ENCODE measurements at regions of chr2 and their contacts with region 1.

Region 1: GRCh38 chr2:88451811-88452565 is 505 bp downstream of the FOXI3 start:
- DNase-seq: peak in 1 of 2 experiments; percentile 76
- H3K4me3 ChIP-seq: peak overlapping the region; percentile 65 to 96 (median 77)
- H3K27ac ChIP-seq: no peak overlapping the region
- H3K4me1 ChIP-seq: peaks cover 0 to 4% (median 2%) of the 10 kb centered on the region in 4 experiments; a peak in 4 of 7 replicates
- H3K27me3 ChIP-seq: peaks cover 0 to 21% (median 9%) of the 10 kb centered on the region in 4 experiments; a peak in 6 of 7 replicates
- CTCF ChIP-seq: no peak
- EP300 ChIP-seq: no peak
- POLR2A ChIP-seq: no peak
- RAD21 ChIP-seq: no peak

Region 2: DNA sequence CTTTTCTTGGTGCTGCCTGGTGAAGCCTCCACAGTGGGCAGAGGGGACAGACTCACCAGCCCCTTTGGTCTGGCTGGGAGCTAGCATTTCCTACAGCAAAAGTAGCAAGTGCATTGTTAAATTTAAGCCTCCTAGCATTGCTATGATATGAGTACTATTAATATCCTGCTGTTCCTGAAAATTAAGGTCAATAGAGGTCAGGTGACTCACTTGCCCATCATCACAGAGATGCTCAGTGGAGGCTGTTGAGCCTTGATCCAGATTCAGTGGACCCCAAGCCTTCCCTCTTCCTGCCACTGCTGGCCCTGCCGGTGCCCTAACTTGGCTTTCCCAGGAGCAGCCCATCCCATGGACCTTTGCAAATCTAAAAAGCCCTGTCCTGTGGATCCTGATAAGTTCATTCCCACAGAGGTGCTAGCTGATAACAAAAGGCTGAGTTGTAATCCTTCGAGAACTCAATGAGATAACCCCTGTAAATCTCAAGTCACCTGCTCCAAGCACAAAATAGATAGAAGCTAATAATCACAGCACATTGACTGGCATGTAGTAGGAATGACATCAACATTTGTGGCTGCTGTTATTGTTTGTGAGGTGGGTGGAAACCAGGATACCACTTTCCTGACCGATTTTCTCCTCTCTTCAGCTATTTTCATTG is 197.4 kb before region 1 on chr2:
- CTCF ChIA-PET with region 1: interaction called, 24 read pairs
- POLR2A ChIA-PET with region 1: no interaction called
- DNase-seq: no peak
- H3K4me3 ChIP-seq: no peak overlapping the region
- H3K27ac ChIP-seq: no peak overlapping the region
- H3K4me1 ChIP-seq: no peaks in the 10 kb centered on the region; a peak in 1 of 7 replicates
- H3K27me3 ChIP-seq: no peaks in the 10 kb centered on the region
- CTCF ChIP-seq: no peak
- EP300 ChIP-seq: no peak
- POLR2A ChIP-seq: no peak
- RAD21 ChIP-seq: no peak

Region 3: DNA sequence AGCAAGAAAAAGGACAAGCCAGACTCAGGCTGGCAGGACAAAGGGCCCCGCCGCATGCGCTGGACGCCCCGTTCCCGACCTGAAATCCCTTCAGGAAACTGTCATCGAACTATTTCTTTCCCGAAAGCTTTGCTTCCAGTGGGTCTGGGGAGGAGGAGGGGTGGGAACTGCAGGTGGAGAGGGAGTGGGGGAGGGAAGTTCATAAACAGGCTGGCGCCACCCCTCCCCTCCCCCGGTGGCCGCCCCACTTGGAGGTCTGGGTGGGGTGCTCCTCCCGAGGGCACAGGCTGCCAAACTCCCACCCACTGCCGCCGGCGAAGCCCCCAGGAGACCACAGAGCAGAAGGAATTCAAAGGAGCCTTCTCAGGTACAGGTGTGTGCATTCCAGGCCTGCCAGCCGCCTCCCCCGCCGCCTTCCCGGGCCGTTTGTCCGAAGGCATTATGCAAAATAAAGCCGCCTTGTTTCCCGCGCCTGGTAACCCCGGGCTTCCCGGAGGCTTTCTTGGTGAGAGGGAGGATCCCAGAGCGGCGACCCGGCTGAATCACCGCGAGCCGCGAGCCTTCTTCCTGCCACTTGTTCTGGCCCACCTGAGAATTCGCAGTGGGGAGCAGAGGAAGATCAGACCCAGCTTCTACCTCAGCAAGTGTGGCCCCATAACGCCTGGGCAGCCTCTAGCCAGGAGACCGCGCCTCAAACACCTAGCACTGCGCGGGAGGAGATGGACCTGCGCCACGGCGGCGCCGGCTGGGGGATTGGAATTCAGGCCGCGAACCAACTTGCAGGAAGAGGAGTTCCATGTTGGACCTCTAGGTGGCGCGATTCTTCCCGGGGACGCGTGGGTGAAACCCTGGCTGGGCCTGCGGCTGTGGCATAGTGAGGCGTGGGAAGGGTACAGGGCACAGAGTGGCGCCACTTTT is 101.4 kb before region 1 on chr2:
- CTCF ChIA-PET with region 1: interaction called, 10 read pairs
- POLR2A ChIA-PET with region 1: interaction called, 3 read pairs
- DNase-seq: peak in 1 of 2 experiments; percentile 96
- H3K4me3 ChIP-seq: peak overlapping the region; percentile 14 to 52 (median 34)
- H3K27ac ChIP-seq: peak overlapping the region; percentile 78
- H3K4me1 ChIP-seq: peaks cover 3 to 9% (median 7%) of the 10 kb centered on the region in 4 experiments
- H3K27me3 ChIP-seq: peaks cover 0 to 10% (median 2%) of the 10 kb centered on the region in 4 experiments; a peak in 2 of 7 replicates
- CTCF ChIP-seq: peak; percentile 84 to 90 (median 86)
- EP300 ChIP-seq: 0 out of 3 replicates have a peak, but pooled peaks of 1 of the 2 experiments have one; percentile 37
- POLR2A ChIP-seq: peak in 1 of 2 experiments; percentile 92; a peak in 2 of 3 replicates
- RAD21 ChIP-seq: peak; percentile 50 to 64

Region 4: GRCh38 chr2:88464153-88464552 is 12.2 kb after region 1 on chr2:
- CTCF ChIA-PET with region 1: interaction called, 26 read pairs
- POLR2A ChIA-PET with region 1: interaction called, 3 read pairs
- DNase-seq: no peak
- H3K4me3 ChIP-seq: no peak overlapping the region
- H3K27ac ChIP-seq: no peak overlapping the region
- H3K4me1 ChIP-seq: peaks cover 0 to 3% (median 0%) of the 10 kb centered on the region in 4 experiments; a peak in 1 of 7 replicates
- H3K27me3 ChIP-seq: no peaks in the 10 kb centered on the region
- CTCF ChIP-seq: no peak
- EP300 ChIP-seq: no peak
- POLR2A ChIP-seq: no peak
- RAD21 ChIP-seq: no peak

Region 5: DNA sequence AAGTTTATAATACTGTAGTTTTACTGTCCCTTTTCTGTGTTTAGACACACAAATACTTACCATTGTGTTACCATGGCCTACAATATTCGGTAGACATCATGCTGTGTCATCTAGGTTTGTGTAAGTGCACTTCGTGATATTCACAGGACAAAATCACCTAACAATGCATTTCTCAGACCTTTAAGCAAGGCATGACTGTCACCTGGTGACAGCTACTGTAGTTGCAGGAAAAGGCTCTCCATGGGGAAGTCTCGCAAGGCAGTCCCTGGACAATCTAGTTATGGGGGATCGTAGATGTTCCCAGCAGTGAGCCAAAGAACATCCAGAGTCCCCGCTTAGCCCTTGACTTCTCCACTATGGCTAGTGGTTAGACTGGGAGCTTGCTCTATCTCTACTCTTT is 102.2 kb after region 1 on chr2:
- CTCF ChIA-PET with region 1: interaction called, 15 read pairs
- POLR2A ChIA-PET with region 1: no interaction called
- DNase-seq: no peak
- H3K4me3 ChIP-seq: no peak overlapping the region
- H3K27ac ChIP-seq: no peak overlapping the region
- H3K4me1 ChIP-seq: peaks cover 0 to 5% (median 2%) of the 10 kb centered on the region in 4 experiments; a peak in 4 of 7 replicates
- H3K27me3 ChIP-seq: no peaks in the 10 kb centered on the region
- CTCF ChIP-seq: peak; percentile 56 to 88 (median 80)
- EP300 ChIP-seq: no peak
- POLR2A ChIP-seq: no peak
- RAD21 ChIP-seq: peak; percentile 95 to 97

Region 6: DNA sequence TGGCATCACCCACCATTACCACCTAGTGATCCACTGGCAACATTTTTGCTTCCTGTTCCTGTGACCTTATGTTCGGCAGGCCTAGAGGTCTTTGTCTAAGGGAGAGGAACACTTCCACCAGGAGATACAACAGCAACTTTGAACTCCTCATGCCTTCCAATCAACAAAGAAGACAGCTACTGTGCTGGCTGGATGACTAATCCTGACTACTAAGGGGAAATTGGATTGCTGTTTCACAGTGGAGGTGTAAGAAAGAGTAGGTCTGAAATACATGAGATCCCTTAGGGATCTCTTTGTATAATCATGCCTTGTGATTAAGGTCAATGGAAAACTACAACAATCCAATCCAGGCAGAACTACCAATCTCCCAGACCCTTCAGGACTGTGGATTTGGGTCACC is 130.0 kb after region 1 on chr2:
- CTCF ChIA-PET with region 1: no interaction called
- POLR2A ChIA-PET with region 1: no interaction called
- DNase-seq: no peak
- H3K4me3 ChIP-seq: no peak overlapping the region
- H3K27ac ChIP-seq: no peak overlapping the region
- H3K4me1 ChIP-seq: no peaks in the 10 kb centered on the region
- H3K27me3 ChIP-seq: no peaks in the 10 kb centered on the region
- CTCF ChIP-seq: no peak
- EP300 ChIP-seq: no peak
- POLR2A ChIP-seq: no peak
- RAD21 ChIP-seq: no peak